ENCODE measurements at regions of chr11 and their contacts with region 1.

Region 1: DNA sequence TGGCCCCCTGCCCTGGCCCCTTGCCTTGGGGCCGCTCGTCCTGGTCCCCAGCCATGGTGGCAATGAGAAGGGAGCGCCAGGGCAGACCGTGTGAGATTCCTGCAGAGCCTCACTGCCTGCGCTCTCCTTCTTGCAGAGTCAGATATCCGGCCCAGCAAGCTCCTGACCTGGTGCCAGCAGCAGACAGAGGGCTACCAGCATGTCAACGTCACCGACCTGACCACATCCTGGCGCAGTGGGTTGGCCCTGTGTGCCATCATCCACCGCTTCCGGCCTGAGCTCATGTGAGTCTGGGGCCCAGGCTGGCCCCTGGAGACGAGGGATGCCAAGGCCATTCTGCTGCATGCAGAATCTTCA is 114.1 kb downstream of the MICAL2 start:
- DNase-seq: peak; percentile 74 to 94 (median 88)
- ATAC-seq: peak; percentile 94 to 96 (median 95)
- H3K4me3 ChIP-seq: peak overlapping the region in 1 of 2 donors; percentile 35
- H3K4me3 Mint-ChIP-seq: peak overlapping the region; percentile 59 to 85 (median 62)
- H3K27ac ChIP-seq: peak overlapping the region; percentile 70
- H3K27ac Mint-ChIP-seq: peak overlapping the region; percentile 94 to 96
- H3K4me1 ChIP-seq: peaks cover 21 to 52% of the 10 kb centered on the region in 2 experiments
- H3K4me1 Mint-ChIP-seq: peaks cover 47 to 52% (median 51%) of the 10 kb centered on the region in 3 donors
- H3K27me3 ChIP-seq: no peaks in the 10 kb centered on the region
- H3K27me3 Mint-ChIP-seq: no peaks in the 10 kb centered on the region

Region 2: GRCh38 chr11:10322830-10323792 is 1901.4 kb before region 1 on chr11:
- CTCF ChIA-PET with region 1: no interaction called
- POLR2A ChIA-PET with region 1: interaction called in 1 of 2 experiments, 10 read pairs
- DNase-seq: peak in 6 of 35 experiments; percentile 8 to 64 (median 23)
- ATAC-seq: peak; percentile 63 to 83 (median 78)
- H3K4me3 ChIP-seq: no peak overlapping the region
- H3K4me3 Mint-ChIP-seq: no peak overlapping the region
- H3K27ac ChIP-seq: no peak overlapping the region
- H3K27ac Mint-ChIP-seq: peak overlapping the region in 1 of 2 donors; percentile 5
- H3K4me1 ChIP-seq: peaks cover 0 to 2% of the 10 kb centered on the region in 2 experiments
- H3K4me1 Mint-ChIP-seq: peaks cover 0 to 8% (median 5%) of the 10 kb centered on the region in 3 donors
- H3K27me3 ChIP-seq: peaks cover 0 to 5% of the 10 kb centered on the region in 2 experiments
- H3K27me3 Mint-ChIP-seq: peaks cover 6 to 12% of the 10 kb centered on the region in 2 donors

Region 3: GRCh38 chr11:11592146-11592684 is 632.3 kb before region 1 on chr11:
- CTCF ChIA-PET with region 1: no interaction called
- POLR2A ChIA-PET with region 1: no interaction called
- DNase-seq: no peak
- ATAC-seq: no peak
- H3K4me3 ChIP-seq: no peak overlapping the region
- H3K4me3 Mint-ChIP-seq: no peak overlapping the region
- H3K27ac ChIP-seq: no peak overlapping the region
- H3K27ac Mint-ChIP-seq: no peak overlapping the region
- H3K4me1 ChIP-seq: no peaks in the 10 kb centered on the region
- H3K4me1 Mint-ChIP-seq: no peaks in the 10 kb centered on the region
- H3K27me3 ChIP-seq: no peaks in the 10 kb centered on the region
- H3K27me3 Mint-ChIP-seq: no peaks in the 10 kb centered on the region

Region 4: GRCh38 chr11:12195768-12196167 is 28.7 kb before region 1 on chr11:
- CTCF ChIA-PET with region 1: interaction called, 4 to 13 read pairs
- POLR2A ChIA-PET with region 1: interaction called, 4 to 10 read pairs
- DNase-seq: peak; percentile 25 to 79 (median 51)
- ATAC-seq: peak; percentile 80 to 91 (median 90)
- H3K4me3 ChIP-seq: peak overlapping the region; percentile 45 to 55
- H3K4me3 Mint-ChIP-seq: peak overlapping the region; percentile 73 to 81 (median 80)
- H3K27ac ChIP-seq: peak overlapping the region; percentile 77
- H3K27ac Mint-ChIP-seq: peak overlapping the region; percentile 98 to 99
- H3K4me1 ChIP-seq: peaks cover 52 to 72% of the 10 kb centered on the region in 2 experiments
- H3K4me1 Mint-ChIP-seq: peaks cover 70 to 78% (median 77%) of the 10 kb centered on the region in 3 donors
- H3K27me3 ChIP-seq: no peaks in the 10 kb centered on the region
- H3K27me3 Mint-ChIP-seq: no peaks in the 10 kb centered on the region